CD8-positive, alpha-beta T cell (primary cell): ENCODE measurements at regions of chr12 and their contacts with region 1.

Region 1: GRCh38 chr12:54993161-54993835 is 8.7 kb upstream of the TESPA1 start:
- DNase-seq: peak in 7 of 9 experiments; percentile 32 to 89 (median 59)
- ATAC-seq: peak; percentile 72
- H3K4me3 ChIP-seq: no peak overlapping the region
- H3K4me3 Mint-ChIP-seq: no peak overlapping the region
- H3K27ac ChIP-seq: no peak overlapping the region
- H3K27ac Mint-ChIP-seq: no peak overlapping the region
- H3K4me1 ChIP-seq: peaks cover 48% of the 10 kb centered on the region
- H3K4me1 Mint-ChIP-seq: peaks cover 49% of the 10 kb centered on the region
- H3K27me3 ChIP-seq: no peaks in the 10 kb centered on the region
- H3K27me3 Mint-ChIP-seq: no peaks in the 10 kb centered on the region
- CTCF ChIP-seq: peak; percentile 93

Region 2: DNA sequence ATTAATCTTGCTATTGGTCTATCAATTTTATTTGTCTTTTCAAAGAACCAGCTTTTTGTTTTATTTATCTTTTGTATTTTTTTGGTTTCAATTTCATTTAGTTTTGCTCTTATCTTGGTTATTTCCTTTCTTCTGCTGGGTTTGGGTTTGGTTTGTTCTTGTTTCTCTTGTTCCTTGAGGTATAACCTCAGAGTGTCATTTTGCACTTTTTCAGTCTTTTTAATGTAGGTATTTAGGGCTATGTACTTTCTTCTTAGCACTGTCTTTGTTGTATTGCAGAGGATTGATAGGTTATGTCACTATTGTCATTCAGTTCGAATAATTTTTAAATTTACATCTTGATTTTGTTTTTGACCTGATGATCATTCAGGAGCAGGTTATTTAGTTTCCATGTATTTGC is 252.4 kb before region 1 on chr12:
- CTCF ChIA-PET with region 1: interaction called, 31 read pairs
- POLR2A ChIA-PET with region 1: interaction called, 3 read pairs
- intact Hi-C with region 1: no loop called
- DNase-seq: peak in 2 of 9 experiments; percentile 25 to 59
- ATAC-seq: peak; percentile 69
- H3K4me3 ChIP-seq: no peak overlapping the region
- H3K4me3 Mint-ChIP-seq: peak overlapping the region; percentile 59
- H3K27ac ChIP-seq: peak overlapping the region in 1 of 2 experiments; percentile 70
- H3K27ac Mint-ChIP-seq: peak overlapping the region; percentile 77
- H3K4me1 ChIP-seq: peaks cover 56% of the 10 kb centered on the region
- H3K4me1 Mint-ChIP-seq: peaks cover 84% of the 10 kb centered on the region
- H3K27me3 ChIP-seq: no peaks in the 10 kb centered on the region
- H3K27me3 Mint-ChIP-seq: no peaks in the 10 kb centered on the region
- CTCF ChIP-seq: no peak

Region 3: DNA sequence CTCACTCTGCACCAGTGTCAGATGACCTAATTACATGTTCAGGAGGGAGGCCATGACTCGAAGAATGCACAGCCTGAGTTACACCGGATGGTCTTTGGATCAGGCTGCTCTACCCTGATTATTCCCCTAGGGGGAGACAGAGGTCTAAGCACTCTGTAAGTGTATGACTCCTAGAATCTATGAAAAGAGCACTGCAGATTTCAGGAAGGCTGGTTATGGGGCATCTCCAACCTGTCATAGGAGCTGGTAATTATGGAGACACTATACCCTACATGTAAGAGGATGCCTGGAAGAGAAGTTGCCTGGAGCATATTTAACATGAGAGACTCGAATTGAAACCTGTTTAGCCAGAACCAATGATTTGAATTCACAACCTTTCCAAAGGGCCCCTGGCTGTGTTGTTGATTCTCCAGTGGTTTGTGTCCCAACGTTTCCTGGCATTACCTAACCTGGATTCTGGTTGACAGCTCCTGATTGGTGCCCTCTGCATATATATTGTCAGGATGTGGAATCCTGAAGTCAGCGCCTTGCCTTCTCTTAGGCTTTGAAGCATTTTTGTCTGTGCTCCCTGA is 139.2 kb before region 1 on chr12 and contains the start of gene MUCL1:
- CTCF ChIA-PET with region 1: interaction called, 30 read pairs
- POLR2A ChIA-PET with region 1: no interaction called
- intact Hi-C with region 1: loop called (anchors 1 kb)
- DNase-seq: peak; percentile 52 to 83 (median 72)
- ATAC-seq: peak; percentile 100
- H3K4me3 ChIP-seq: no peak within 1 kb of the TSS
- H3K4me3 Mint-ChIP-seq: no peak within 1 kb of the TSS
- H3K27ac ChIP-seq: no peak within 1 kb of the TSS
- H3K27ac Mint-ChIP-seq: no peak within 1 kb of the TSS
- H3K4me1 ChIP-seq: no peaks in the 10 kb centered on the region
- H3K4me1 Mint-ChIP-seq: peaks cover 4% of the 10 kb centered on the region
- H3K27me3 ChIP-seq: no peaks in the 10 kb centered on the region
- H3K27me3 Mint-ChIP-seq: peaks cover 2% of the 10 kb centered on the region
- CTCF ChIP-seq: peak; percentile 93
- total RNA-seq, gene MUCL1: not detected

Region 4: DNA sequence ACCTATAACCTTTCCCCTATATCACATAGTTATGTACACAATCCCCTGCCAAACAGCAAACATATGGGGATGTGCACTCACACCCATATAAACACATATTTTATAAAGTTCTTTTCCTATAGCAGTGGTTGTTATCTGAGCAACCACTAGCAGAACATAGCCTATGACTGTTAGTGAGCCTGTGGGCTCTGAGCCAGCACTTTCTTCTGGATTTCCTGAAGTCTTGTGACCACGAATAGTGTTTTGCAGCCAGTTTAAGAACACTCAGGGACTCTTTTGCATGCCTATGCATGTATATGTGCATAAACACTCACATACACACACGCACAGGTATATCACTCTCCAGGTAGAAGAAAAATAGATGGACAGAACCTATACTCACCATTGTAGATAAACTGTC is 25.8 kb before region 1 on chr12:
- CTCF ChIA-PET with region 1: interaction called, 13 read pairs
- POLR2A ChIA-PET with region 1: no interaction called
- intact Hi-C with region 1: no loop called
- DNase-seq: peak in 5 of 9 experiments; percentile 40 to 65 (median 50)
- ATAC-seq: peak; percentile 61
- H3K4me3 ChIP-seq: peak overlapping the region in 1 of 2 experiments; percentile 6
- H3K4me3 Mint-ChIP-seq: peak overlapping the region; percentile 70
- H3K27ac ChIP-seq: peak overlapping the region in 1 of 2 experiments; percentile 34
- H3K27ac Mint-ChIP-seq: peak overlapping the region; percentile 91
- H3K4me1 ChIP-seq: peaks cover 57% of the 10 kb centered on the region
- H3K4me1 Mint-ChIP-seq: peaks cover 80% of the 10 kb centered on the region
- H3K27me3 ChIP-seq: no peaks in the 10 kb centered on the region
- H3K27me3 Mint-ChIP-seq: no peaks in the 10 kb centered on the region
- CTCF ChIP-seq: no peak

Region 5: DNA sequence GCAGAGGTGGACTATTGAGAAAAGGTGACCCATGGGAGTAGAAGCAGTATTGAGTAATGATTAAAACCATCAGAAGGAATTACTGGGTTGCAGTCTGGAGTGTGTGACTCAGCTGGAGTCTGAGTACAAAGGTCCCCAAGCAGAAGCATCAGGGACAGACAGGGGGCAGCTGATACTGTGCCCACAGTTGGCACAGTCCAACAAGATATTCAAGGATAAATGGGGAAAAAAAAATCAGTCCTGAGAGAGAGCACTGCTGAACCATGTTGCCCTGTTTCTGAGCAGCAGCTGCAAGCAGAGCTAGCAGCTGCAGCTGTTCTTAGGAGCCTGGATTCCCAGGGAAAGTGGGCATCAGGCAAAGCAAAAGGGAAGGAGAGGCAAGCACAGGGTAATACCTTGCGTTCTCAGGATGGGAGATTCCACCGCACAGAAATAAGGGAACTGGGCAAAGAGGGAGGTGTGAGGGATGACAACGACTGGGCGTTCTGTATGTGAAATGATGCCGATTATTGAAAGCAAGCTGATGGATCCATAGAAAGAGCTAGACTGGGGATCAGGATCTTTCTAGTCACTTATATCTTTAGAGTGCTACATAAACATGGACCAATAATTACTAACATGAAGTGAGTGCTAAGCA is 44.2 kb after region 1 on chr12:
- CTCF ChIA-PET with region 1: interaction called, 14 read pairs
- POLR2A ChIA-PET with region 1: no interaction called
- intact Hi-C with region 1: no loop called
- DNase-seq: no peak
- ATAC-seq: no peak
- H3K4me3 ChIP-seq: no peak overlapping the region
- H3K4me3 Mint-ChIP-seq: no peak overlapping the region
- H3K27ac ChIP-seq: no peak overlapping the region
- H3K27ac Mint-ChIP-seq: peak overlapping the region; percentile 10
- H3K4me1 ChIP-seq: peaks cover 43% of the 10 kb centered on the region
- H3K4me1 Mint-ChIP-seq: peaks cover 57% of the 10 kb centered on the region
- H3K27me3 ChIP-seq: no peaks in the 10 kb centered on the region
- H3K27me3 Mint-ChIP-seq: peaks cover 1% of the 10 kb centered on the region
- CTCF ChIP-seq: no peak

Region 6: DNA sequence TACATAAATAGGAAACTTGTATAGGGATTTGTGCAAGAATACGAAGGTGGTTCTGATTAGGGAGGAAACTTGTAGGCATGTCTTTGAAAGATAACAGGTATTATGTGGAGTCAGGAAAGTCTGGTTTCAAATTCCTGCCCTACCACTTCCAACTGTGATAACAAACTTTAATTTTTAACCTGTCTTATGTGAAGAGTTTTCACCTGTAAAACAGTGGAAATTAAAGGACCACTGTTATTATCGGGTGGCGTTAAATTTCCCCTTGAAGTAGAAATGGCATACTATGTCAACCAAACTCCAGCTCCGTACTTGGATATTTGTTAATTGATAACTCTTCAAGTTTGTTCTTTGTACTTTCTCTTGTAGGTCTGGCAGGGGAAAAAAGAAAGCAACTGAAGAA is 326.9 kb after region 1 on chr12:
- CTCF ChIA-PET with region 1: no interaction called
- POLR2A ChIA-PET with region 1: no interaction called
- intact Hi-C with region 1: no loop called
- DNase-seq: no peak
- ATAC-seq: no peak
- H3K4me3 ChIP-seq: no peak overlapping the region
- H3K4me3 Mint-ChIP-seq: no peak overlapping the region
- H3K27ac ChIP-seq: no peak overlapping the region
- H3K27ac Mint-ChIP-seq: no peak overlapping the region
- H3K4me1 ChIP-seq: no peaks in the 10 kb centered on the region
- H3K4me1 Mint-ChIP-seq: no peaks in the 10 kb centered on the region
- H3K27me3 ChIP-seq: no peaks in the 10 kb centered on the region
- H3K27me3 Mint-ChIP-seq: peaks cover 20% of the 10 kb centered on the region
- CTCF ChIP-seq: no peak